ENCODE measurements at regions of chr10 and their contacts with region 1.

Region 1: DNA sequence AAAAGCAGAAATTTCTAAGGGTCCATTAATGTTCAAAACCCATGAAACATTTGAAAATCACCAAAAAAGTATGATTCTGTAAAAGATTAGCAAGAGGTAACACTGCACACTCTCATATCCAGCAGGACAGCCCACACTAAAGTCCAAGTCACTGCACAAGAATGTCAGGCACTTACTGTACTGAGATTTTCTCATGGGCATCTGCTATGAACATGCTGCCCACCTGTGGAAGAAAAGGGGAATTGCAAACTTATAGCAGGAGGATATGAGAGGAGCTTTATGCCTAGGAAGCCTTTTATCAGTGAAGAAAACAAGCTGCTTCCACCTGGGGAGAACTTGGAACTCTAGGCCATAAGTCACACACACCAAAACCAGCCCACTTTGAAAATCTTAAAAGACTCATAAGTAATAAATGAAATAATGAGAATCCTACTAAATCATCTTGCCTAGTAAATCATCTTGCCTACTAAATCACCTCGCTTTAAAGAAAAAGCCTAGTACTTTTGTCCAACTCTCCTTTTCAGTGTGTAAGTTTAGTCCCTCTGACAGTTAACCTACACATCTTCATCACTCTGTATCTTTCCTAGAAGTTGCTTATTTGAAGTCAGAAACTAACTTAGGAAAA is 46.1 kb downstream of the ARMH3 start:
- DNase-seq: peak; percentile 74
- H3K4me3 ChIP-seq: no peak overlapping the region
- H3K27ac ChIP-seq: peak overlapping the region in 1 of 2 experiments; percentile 47; a peak in 3 of 4 replicates
- H3K4me1 ChIP-seq: peaks cover 0 to 4% of the 10 kb centered on the region in 2 experiments; a peak in 1 of 4 replicates
- H3K27me3 ChIP-seq: no peaks in the 10 kb centered on the region
- CTCF ChIP-seq: peak; percentile 95
- EP300 ChIP-seq: no peak
- RAD21 ChIP-seq: peak; percentile 97

Region 2: GRCh38 chr10:101818119-101818871 is 191.6 kb before region 1 on chr10 and contains the start of gene OGA:
- CTCF ChIA-PET with region 1: interaction called, 14 read pairs
- POLR2A ChIA-PET with region 1: interaction called, 4 read pairs
- DNase-seq: peak; percentile 96
- H3K4me3 ChIP-seq: peak within 1 kb of the TSS; percentile 88 to 96
- H3K27ac ChIP-seq: peak within 1 kb of the TSS; percentile 81 to 97
- H3K4me1 ChIP-seq: peaks cover 6 to 21% of the 10 kb centered on the region in 2 experiments; a peak in 3 of 4 replicates
- H3K27me3 ChIP-seq: no peaks in the 10 kb centered on the region
- CTCF ChIP-seq: no peak
- EP300 ChIP-seq: peak in 1 of 2 experiments; percentile 53; a peak in 1 of 4 replicates
- RAD21 ChIP-seq: no peak
- polyA plus RNA-seq, gene OGA: 24.8 and 36.6 TPM in 2 replicates

Region 3: DNA sequence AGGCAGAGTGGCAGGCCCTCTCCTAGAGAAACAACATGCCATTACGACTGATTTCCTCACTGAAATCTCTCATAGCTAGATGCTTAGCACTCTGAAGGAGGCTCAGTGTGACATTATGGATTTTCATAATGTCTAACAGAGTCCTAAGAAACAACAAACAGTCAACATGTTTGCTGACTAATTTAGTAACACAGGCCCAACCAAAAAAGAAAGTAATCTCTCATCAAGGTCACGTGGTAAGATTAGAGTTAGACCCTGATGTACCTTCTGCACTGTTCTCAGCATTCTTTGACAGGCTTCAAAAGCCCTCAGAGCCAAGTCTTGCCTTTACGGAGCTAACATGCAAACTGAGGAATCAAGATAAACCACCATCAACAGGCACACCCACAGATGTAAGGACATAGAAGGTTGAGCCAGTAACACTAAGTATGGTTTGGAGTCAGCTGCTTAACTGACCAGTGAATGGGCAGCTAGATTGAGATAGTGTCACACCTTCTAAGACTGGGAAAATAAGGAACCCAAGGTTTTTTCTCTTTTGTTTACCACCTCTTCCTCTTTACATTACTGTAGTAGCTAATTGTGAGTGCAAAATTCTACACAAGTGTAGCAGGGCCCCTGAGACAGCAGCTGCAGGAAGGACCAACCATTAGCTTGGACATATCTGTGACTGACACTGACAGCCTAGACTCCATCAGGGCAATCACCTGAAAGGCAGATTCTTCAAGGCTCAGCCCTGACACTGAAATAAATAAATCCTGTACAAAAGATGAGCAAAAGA is 151.0 kb before region 1 on chr10:
- CTCF ChIA-PET with region 1: interaction called, 15 read pairs
- POLR2A ChIA-PET with region 1: no interaction called
- DNase-seq: no peak
- H3K4me3 ChIP-seq: no peak overlapping the region
- H3K27ac ChIP-seq: no peak overlapping the region
- H3K4me1 ChIP-seq: no peaks in the 10 kb centered on the region
- H3K27me3 ChIP-seq: no peaks in the 10 kb centered on the region
- CTCF ChIP-seq: no peak
- EP300 ChIP-seq: no peak
- RAD21 ChIP-seq: no peak

Region 4: DNA sequence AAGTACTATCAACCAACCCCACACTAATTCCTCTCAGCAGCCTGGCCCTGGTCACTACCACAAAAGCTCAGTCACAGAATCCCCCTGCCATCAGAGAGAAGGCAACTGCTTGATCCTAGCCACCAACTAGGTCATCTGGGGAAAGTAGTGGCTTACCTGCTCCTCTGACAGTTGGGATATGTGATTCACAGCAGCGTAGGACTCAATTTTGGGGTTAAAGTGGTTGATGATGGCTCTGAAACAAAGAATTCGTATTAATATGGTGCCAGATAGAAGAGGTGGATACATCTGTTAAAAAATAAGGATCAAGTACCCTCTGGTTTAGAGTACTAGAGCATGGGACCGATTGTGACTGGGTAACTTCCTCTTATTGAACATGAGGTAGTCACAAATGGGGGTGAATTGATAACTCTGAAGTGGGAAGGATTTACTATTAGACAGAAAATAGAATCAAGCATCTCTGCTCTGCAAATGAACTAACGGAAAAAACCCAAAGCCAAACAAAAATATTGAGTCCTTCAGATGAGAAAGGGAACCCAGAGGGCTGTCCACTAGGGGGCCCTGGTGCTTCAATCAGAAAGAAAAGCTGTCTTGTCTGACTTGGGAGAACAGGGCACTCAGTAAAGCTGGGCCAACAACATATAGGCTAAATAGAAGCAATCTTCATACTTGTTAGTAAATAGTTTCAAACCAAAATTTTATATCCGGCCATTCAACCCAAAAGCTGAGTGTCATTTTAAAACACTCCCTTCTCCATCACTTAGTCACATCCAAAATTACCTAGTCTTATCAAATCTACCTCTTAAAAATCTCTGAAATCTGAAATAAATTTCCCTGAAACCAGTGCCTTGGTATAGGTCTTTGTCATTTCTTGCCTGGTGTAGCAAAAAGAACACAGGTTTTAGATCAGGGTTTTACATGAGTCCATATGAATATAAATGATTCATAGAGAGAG is 120.4 kb before region 1 on chr10:
- CTCF ChIA-PET with region 1: interaction called, 120 read pairs
- POLR2A ChIA-PET with region 1: no interaction called
- DNase-seq: peak; percentile 66
- H3K4me3 ChIP-seq: no peak overlapping the region; a peak in 1 of 4 replicates
- H3K27ac ChIP-seq: no peak overlapping the region
- H3K4me1 ChIP-seq: peaks cover 0 to 2% of the 10 kb centered on the region in 2 experiments; a peak in 1 of 4 replicates
- H3K27me3 ChIP-seq: no peaks in the 10 kb centered on the region
- CTCF ChIP-seq: peak; percentile 97
- EP300 ChIP-seq: no peak
- RAD21 ChIP-seq: peak; percentile 86

Region 5: DNA sequence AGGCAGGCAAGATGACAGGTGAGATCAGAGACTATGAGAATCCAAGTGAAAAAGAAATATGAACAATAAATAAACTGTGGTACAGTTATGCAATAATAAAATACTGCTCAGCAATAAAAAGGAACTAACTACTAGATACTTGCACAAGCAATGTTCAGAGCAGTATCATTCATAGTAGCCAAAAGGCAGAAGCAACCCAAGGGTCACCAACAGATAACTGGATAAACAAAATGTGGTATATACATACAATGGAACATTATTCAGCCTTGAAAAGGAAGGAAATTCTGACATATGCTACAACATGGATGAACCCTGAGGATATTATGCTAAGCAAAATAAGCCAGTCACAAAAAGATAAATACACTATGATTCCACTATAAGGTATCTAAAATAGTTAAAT is 89.4 kb before region 1 on chr10:
- CTCF ChIA-PET with region 1: interaction called, 13 read pairs
- POLR2A ChIA-PET with region 1: no interaction called
- DNase-seq: no peak
- H3K4me3 ChIP-seq: no peak overlapping the region
- H3K27ac ChIP-seq: no peak overlapping the region
- H3K4me1 ChIP-seq: no peaks in the 10 kb centered on the region
- H3K27me3 ChIP-seq: no peaks in the 10 kb centered on the region
- CTCF ChIP-seq: no peak
- EP300 ChIP-seq: no peak
- RAD21 ChIP-seq: no peak

Region 6: DNA sequence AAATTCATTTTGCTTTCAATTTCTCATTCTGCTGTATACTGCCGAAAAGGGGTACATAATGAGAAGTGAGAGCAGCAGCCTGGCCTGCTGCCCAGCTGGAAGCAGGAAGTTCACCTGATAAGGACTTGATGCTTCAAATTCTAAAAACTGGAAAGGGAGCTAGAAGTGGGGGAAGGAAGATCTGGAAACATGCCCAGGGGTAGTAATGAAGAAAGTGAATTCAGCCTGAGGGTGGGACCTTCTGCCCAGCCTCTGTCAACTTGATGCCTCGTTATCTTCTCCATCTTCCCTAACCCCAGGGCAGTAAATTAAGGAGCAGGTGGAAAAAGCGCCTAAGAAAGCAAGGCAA is 23.3 kb before region 1 on chr10:
- CTCF ChIA-PET with region 1: interaction called, 10 read pairs
- POLR2A ChIA-PET with region 1: no interaction called
- DNase-seq: peak; percentile 24
- H3K4me3 ChIP-seq: no peak overlapping the region
- H3K27ac ChIP-seq: peak overlapping the region in 1 of 2 experiments; percentile 24; a peak in 1 of 4 replicates
- H3K4me1 ChIP-seq: peaks cover 0 to 8% of the 10 kb centered on the region in 2 experiments; a peak in 2 of 4 replicates
- H3K27me3 ChIP-seq: no peaks in the 10 kb centered on the region
- CTCF ChIP-seq: no peak
- EP300 ChIP-seq: no peak
- RAD21 ChIP-seq: no peak

Region 7: DNA sequence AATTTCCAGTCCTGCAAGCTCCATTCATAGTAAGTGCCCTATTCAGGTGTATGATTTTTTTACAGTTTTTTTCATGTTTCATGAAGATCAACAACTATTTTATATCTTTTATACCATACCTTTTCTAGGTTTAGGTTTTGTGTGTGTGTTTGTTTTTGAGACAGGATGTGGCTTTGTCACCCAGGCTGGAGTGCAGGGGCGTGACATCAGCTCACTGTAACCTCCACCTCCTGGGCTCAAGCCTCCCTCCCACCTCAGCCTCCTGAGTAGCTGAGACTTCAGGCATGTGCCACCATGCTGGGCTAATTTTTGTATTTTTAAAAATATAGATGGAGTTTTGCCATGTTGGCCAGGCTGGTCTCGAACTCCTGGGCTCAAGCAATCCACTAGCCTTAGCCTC is 11.0 kb after region 1 on chr10:
- CTCF ChIA-PET with region 1: interaction called, 19 read pairs
- POLR2A ChIA-PET with region 1: no interaction called
- DNase-seq: no peak
- H3K4me3 ChIP-seq: no peak overlapping the region
- H3K27ac ChIP-seq: no peak overlapping the region
- H3K4me1 ChIP-seq: no peaks in the 10 kb centered on the region
- H3K27me3 ChIP-seq: no peaks in the 10 kb centered on the region
- CTCF ChIP-seq: no peak
- EP300 ChIP-seq: no peak
- RAD21 ChIP-seq: no peak

Region 8: GRCh38 chr10:102101152-102101551 is 91.2 kb after region 1 on chr10:
- CTCF ChIA-PET with region 1: no interaction called
- POLR2A ChIA-PET with region 1: no interaction called
- DNase-seq: no peak
- H3K4me3 ChIP-seq: no peak overlapping the region
- H3K27ac ChIP-seq: no peak overlapping the region
- H3K4me1 ChIP-seq: no peaks in the 10 kb centered on the region
- H3K27me3 ChIP-seq: no peaks in the 10 kb centered on the region
- CTCF ChIP-seq: no peak
- EP300 ChIP-seq: no peak
- RAD21 ChIP-seq: no peak